Heart left ventricle (tissue), 16 donors: ENCODE measurements at regions of chr19 and their contacts with region 1.

Region 1: GRCh38 chr19:11558881-11559828 is at the start of gene ELOF1:
- DNase-seq: peak; percentile 97 to 99 (median 99)
- ATAC-seq: peak; percentile 99
- H3K4me3 ChIP-seq: peak within 1 kb of the TSS; percentile 49 to 97 (median 87)
- H3K27ac ChIP-seq: peak within 1 kb of the TSS in 11 of 12 donors; percentile 70 to 88 (median 79)
- H3K4me1 ChIP-seq: peaks cover 0 to 39% (median 23%) of the 10 kb centered on the region in 12 donors
- H3K27me3 ChIP-seq: no peaks in the 10 kb centered on the region
- CTCF ChIP-seq: peak in 5 of 12 donors; percentile 1 to 42 (median 19)
- POLR2A ChIP-seq: peak in 1 of 2 donors; percentile 84
- total RNA-seq, gene ELOF1: 25.0 to 41.5 (median 27.7) TPM

Region 2: DNA sequence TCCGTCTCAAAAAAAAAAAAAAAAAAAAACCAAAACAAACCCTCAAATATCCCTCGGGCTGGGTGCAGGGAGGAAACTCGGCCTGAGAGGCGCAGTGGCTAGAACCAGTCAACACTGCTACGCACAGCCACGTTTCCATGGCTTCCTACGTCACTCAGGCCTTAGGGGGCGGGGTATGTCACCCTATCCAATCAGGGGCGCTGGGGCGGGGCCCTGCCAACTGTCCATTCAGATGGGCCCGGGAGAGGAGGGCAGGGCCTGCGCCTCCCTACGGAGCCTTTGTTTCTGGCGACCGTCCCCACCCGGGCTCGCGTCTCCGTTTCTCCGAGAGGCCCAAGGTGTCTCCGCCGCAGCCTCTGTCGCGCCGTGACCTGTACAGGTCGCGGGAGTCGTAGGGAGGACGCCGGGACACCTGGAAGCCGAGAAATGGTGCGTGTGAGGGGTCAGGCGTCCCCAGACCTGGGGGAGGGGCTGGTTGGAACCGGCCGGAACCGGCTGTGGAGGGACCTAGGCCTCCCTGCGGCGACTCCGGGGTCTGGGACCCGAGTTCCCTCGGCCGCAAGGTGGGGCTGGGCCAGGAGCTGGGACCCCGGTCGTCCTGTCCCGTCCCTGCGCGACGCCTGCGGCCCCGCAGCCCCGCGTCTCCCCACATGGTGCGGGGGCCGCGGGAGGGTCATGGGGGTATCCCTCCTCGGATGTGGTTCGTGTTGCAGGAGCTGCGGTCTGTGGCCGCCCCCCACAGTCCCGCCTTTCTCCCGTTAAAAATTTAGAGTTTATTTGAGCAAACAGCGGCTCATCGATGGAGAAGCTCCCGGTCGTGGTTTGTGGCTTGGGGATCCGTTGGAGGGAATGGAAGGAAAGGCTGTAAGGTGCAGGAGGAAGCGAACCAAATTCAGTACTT is 38.3 kb after region 1 on chr19 and contains the start of gene ZNF627:
- intact Hi-C with region 1: loop called in 1 of 10 experiments (anchors 5 kb)
- DNase-seq: peak; percentile 99 to 100 (median 99)
- ATAC-seq: peak; percentile 100
- H3K4me3 ChIP-seq: peak within 1 kb of the TSS; percentile 70 to 99 (median 88)
- H3K27ac ChIP-seq: peak within 1 kb of the TSS; percentile 44 to 95 (median 91)
- H3K4me1 ChIP-seq: peaks cover 0 to 19% (median 12%) of the 10 kb centered on the region in 12 donors
- H3K27me3 ChIP-seq: no peaks in the 10 kb centered on the region
- CTCF ChIP-seq: peak in 6 of 12 donors; percentile 5 to 47 (median 27)
- POLR2A ChIP-seq: peak; percentile 80 to 96
- total RNA-seq, gene ZNF627: 3.5 to 9.2 (median 6.0) TPM

Region 3: DNA sequence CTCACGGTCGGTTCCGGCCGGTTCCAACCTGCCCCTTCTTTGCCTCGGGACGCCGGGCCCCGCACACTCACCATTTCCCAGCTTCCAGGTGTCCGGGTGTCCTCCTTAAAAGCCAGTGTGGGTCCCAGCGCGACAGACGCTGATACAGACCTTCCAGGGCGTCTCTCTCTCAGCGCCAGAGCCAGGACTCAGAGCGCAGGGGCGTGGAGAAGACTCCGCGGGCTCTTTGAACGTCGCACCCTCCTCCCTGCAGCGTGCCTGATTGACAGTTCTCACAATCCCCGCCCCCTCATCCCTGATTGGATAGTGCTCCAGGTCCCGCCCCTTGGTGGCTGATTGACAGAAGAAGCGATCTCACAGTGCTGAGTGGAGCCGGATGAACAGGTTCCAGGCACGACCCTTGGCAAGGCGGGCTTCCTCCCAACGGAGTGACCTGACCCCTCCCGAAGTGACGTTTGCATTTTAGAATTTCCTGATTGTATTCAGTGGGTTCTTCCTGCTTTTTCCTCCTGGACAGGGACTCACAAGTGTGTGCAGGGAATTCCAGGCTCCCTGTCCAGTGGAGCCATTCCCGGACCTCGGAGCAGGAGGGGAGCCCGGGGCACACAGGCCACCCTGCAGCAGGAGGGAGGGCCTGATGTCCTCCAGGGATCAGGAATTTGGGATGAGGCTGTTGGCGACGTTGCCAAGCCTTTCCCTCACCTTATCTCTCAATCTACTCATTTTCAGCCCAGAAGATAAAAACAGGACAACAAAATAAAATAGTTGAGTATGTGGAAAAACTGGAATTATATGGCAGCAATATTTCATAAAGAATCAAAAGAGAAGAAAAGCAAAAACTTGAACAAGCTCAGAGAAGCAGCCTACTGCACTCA is 179.8 kb after region 1 on chr19 and contains the start of gene ZNF823:
- intact Hi-C with region 1: no loop called
- DNase-seq: peak; percentile 98 to 99 (median 99)
- ATAC-seq: peak; percentile 99 to 100 (median 100)
- H3K4me3 ChIP-seq: peak within 1 kb of the TSS; percentile 79 to 100 (median 92)
- H3K27ac ChIP-seq: peak within 1 kb of the TSS; percentile 77 to 96 (median 92)
- H3K4me1 ChIP-seq: peaks cover 0 to 27% (median 20%) of the 10 kb centered on the region in 12 donors
- H3K27me3 ChIP-seq: no peaks in the 10 kb centered on the region
- CTCF ChIP-seq: peak in 1 of 12 donors; percentile 9
- POLR2A ChIP-seq: peak in 1 of 2 donors; percentile 85
- total RNA-seq, gene ZNF823: 2.6 to 5.2 (median 4.0) TPM